Posterior cingulate gyrus (tissue), 11 donors: ENCODE measurements at regions of chr3 and their contacts with region 1.

Region 1: DNA sequence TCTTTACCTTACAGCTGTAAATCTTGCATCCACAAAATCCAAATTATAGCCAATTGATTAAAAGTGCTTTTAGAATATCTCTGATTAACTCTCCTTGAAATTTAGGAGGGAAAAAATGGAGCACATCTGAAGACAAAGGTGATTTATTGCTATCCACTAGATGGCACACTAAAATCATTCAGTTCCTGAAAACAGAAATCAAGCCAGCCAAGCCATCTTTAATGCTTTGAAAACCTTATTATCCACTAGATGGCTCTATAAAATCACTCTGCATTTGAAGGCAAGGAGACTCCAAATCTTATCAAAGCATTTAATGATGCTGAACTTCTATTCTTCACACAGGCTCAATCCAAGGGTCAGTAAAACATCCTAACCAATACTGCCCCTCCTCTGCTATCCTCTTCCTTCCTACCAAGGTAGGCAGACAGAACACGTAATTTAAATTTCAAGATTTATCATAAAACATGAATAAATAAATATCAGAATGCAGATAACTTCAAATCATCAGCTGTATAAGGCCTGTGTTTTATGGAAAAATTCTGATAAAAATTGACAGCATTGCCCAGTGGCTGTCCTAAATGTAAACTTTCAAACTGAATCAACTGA is 48.4 kb downstream of the GOLIM4 start:
- DNase-seq: no peak

Region 2: GRCh38 chr3:168095611-168096209 is 48.4 kb after region 1 on chr3 and contains the start of gene GOLIM4:
- intact Hi-C with region 1: loop called (anchors 5 kb)
- DNase-seq: peak; percentile 88 to 99 (median 94)

Region 3: DNA sequence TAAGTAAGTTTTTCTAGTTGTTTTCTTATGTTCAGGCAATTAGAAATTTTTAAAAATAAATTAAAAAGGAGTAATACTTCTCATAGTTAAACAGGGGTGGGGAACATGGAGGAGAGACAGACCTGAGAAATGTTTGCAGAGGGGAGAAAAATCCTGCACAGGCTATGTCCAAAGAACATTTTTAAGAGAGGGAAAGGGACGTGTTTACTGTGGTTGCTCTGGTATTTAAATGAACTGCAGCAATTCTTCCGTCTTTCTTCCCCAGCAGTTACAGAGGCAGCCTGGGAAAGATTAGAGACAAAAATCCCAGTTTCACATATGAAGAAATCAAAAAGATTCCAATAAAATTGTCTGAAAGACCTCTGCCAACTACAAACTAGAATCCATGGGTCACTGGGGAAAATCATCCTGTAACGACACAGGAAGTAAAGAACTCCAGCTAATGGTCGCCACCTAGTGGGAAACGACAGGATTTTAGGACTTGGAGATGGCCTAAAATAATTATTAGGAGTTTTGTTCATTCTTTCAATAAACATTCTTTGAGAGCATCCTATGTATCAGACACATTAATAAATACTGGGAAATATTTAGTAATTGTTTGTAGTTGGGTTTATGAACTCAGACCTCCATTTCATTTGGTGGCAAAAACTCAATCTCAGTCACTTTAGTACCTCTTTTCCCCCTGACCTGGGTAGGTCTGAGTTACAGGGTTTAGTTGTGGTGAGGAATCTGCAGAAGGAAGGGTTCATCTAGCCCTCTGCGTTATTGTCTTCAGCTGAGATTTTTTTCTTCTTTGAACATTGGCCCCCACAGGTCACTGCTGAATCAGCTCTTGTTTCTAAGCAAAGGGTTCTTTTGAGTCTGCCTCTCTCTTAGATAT is 118.3 kb after region 1 on chr3:
- intact Hi-C with region 1: loop called (anchors 1 kb)
- DNase-seq: peak in 6 of 10 donors; percentile 23 to 67 (median 54)

Region 4: DNA sequence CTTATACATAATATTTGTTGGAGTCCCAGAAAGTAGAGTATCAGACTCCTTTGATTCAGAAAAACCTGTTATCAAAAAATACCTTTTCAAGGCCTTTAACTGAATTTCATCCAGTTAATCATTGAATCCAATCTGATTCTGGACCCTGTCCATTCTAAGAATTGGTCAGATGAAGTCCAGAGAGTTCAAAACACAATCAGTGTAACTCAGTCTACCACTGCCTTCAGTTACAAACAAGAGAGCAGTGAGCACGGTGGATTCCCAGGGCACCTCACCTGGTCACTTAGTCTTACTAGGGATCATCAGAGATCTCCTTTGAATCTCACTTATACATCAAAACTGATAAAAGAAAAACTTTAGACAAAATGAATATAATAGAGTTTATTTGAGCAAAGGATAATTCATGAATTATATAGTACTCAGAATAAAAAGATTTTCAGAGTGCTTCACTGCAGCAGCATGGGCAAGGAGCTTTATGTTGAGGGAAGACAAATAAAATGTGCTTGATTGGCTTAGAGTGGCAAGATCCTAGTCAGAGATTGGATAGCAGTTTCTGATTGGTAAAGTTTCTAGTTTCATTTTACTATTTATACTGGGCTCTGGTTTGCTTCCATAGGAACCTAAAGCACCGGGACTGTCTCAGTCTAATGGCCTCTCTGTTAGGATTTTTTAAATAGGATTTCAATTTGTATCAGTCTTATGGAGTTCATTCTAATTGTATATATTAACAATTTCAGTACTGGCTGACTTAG is 523.3 kb after region 1 on chr3:
- intact Hi-C with region 1: no loop called
- DNase-seq: no peak

Region 5: GRCh38 chr3:168847291-168847883 is 800.1 kb after region 1 on chr3:
- intact Hi-C with region 1: loop called (anchors 5 kb)
- DNase-seq: peak in 2 of 10 donors; percentile 8 to 10